ENCODE measurements at regions of chr6 and their contacts with region 1.

Region 1: DNA sequence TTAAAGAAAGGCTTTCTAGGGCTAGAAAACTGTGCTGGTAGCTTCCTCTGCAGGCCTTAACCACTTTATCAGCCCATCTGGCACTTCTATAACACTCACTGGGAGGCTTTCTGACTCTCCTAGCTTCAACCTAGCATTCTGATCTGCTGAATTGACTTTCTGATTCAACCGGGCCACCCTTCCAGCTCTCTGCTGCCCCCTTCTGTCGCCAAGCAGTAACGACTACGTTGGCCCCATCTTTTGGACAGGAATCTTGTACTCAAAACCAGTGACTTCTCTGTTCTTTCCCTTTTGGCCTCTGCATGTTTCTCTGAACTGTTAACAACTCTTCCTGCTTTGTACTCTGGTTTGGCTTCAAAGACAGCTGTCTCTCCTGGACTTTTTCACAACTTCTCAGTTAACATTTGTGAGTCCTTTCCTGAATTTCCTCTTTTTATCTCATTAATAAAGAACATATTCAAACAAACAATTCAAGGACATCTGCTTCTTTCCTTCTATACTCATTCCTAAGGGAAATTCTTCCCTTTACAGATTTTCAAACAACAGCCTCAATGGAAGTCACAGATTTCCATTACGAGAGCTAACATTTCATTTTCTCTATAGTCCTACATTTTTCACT is 43.9 kb upstream of the FAM135A start:
- DNase-seq: peak; percentile 78
- ATAC-seq: peak; percentile 76

Region 2: DNA sequence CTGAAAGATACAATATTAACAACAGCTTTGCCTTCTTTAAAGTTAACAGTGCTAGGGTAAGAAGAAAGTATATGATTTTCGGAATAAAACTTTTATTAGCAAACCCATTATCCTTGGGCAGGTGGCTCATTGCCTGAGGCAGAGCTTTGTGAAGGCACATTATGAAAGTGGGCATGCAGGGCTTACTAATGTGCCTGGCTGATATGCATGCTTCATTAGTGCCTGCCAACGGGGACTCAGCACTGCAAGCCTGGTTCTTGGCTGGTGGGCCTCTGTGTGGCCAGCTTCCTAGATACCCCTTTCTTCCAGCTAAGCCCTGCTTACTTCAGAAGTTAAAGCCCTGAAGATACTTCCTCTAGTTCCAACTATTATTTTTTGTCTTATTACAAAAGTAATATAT is 1252.8 kb before region 1 on chr6:
- intact Hi-C with region 1: loop called (anchors 10 kb)
- DNase-seq: no peak
- ATAC-seq: no peak

Region 3: GRCh38 chr6:70304616-70305015 is 64.8 kb before region 1 on chr6:
- intact Hi-C with region 1: loop called (anchors 10 kb)
- DNase-seq: no peak
- ATAC-seq: no peak

Region 4: DNA sequence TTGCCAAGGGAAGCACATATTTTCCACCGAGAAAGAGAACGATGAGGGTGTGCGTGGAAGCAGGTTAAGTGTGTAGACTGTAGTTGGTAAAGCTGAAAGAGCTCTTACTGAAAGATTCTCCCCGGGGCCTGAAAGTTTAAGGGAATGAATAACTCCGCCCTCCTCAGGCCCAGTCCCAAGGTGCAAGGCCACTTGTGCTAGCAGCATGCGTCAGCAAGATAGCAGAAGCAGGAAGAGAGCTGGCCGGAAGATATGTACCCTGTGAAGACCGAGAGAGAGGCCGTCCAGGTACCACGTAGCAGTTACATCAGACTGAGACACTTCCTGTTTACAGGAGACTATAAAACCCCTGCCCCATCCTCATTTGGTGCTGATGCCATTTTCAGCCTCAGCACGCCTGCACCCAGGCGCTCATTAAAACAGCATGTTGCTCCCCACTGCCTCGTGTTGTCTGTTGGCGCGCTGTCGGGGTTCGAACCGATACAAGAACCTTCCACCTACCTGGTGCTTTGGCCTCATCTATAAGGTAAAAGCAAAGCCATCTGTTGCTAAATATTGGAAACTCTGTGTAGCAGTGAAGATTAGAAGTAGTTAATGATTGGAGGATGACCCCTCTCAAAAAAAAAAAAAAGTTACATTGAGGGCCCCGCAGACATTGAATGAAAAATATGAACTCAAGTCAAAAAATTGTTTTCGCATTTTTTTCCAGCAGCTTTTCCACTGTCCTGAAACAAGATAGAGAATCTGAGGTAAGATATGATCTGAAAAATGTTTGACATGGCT is 25.3 kb after region 1 on chr6:
- intact Hi-C with region 1: no loop called
- DNase-seq: no peak
- ATAC-seq: no peak